ENCODE measurements at regions of chr11 and their contacts with region 1.

Region 1: DNA sequence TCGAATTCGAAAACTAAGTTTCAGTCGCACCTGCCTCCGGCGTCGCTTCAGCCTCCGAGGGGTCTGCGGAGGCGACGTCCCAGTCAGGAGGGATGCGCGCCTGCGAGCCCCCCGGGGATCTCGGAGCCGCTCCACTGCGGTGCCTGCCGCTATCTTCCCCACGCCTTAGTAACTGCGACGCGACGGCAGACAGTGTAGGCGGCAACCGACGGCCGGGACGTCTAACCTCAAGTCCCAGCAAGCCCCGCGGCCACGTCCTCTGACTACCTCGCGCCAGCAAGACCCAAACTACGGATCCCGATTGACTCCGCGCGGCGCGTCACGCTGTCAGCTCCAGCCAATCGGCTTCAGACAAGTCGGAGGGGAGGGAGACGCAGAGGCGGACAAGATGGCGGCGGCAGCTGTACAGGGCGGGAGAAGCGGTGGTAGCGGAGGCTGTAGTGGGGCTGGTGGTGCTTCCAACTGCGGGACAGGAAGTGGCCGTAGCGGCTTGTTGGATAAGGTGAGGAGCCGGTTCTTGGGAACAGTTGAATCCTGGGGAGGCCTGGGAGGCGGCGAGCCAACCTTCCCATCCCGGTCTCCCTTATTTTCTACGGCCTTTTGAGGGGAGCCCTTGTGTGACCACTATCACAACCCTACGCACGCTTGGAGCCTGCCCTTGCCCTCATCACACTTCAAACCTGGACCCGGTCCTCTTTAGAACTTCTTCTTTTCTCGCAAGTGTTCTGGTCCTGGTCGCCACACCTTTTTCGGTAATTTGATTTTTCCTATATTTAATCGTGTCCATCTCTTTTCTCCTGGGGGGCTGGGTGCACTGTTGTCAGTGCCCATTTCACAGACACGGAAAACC is at the starts of genes SPCS2 and XRRA1:
- DNase-seq: peak; percentile 99
- H3K4me3 ChIP-seq: peak within 1 kb of the TSS; percentile 55 to 95 (median 93)
- H3K27ac ChIP-seq: peak within 1 kb of the TSS; percentile 73
- H3K4me1 ChIP-seq: peaks cover 12% of the 10 kb centered on the region
- H3K27me3 ChIP-seq: no peaks in the 10 kb centered on the region
- CTCF ChIP-seq: no peak
- POLR2A ChIP-seq: peak; percentile 82
- total RNA-seq, gene SPCS2: 140 and 152 TPM in 2 replicates
- total RNA-seq, gene XRRA1: 11.2 and 28.6 TPM in 2 replicates

Region 2: GRCh38 chr11:74966651-74967050 is 17.5 kb after region 1 on chr11:
- CTCF ChIA-PET with region 1: interaction called, 4 read pairs
- POLR2A ChIA-PET with region 1: no interaction called
- dilution Hi-C with region 1: no loop called
- intact Hi-C with region 1: loop called (anchors 2 kb)
- DNase-seq: no peak
- H3K4me3 ChIP-seq: no peak overlapping the region
- H3K27ac ChIP-seq: peak overlapping the region; percentile 33
- H3K4me1 ChIP-seq: no peaks in the 10 kb centered on the region
- H3K27me3 ChIP-seq: no peaks in the 10 kb centered on the region
- CTCF ChIP-seq: no peak
- POLR2A ChIP-seq: no peak

Region 3: GRCh38 chr11:75031771-75032549 is 82.8 kb after region 1 on chr11:
- CTCF ChIA-PET with region 1: no interaction called
- POLR2A ChIA-PET with region 1: no interaction called
- dilution Hi-C with region 1: no loop called
- intact Hi-C with region 1: loop called (anchors 5 kb)
- DNase-seq: peak; percentile 70
- H3K4me3 ChIP-seq: no peak overlapping the region
- H3K27ac ChIP-seq: no peak overlapping the region
- H3K4me1 ChIP-seq: peaks cover 8% of the 10 kb centered on the region
- H3K27me3 ChIP-seq: peaks cover 0 to 7% of the 10 kb centered on the region in 2 experiments
- CTCF ChIP-seq: peak; percentile 85
- POLR2A ChIP-seq: no peak

Region 4: GRCh38 chr11:75174781-75175370 is 225.8 kb after region 1 on chr11:
- CTCF ChIA-PET with region 1: no interaction called
- POLR2A ChIA-PET with region 1: no interaction called
- dilution Hi-C with region 1: no loop called
- intact Hi-C with region 1: no loop called
- DNase-seq: no peak
- H3K4me3 ChIP-seq: no peak overlapping the region
- H3K27ac ChIP-seq: no peak overlapping the region
- H3K4me1 ChIP-seq: no peaks in the 10 kb centered on the region
- H3K27me3 ChIP-seq: peaks cover 2 to 5% of the 10 kb centered on the region in 2 experiments
- CTCF ChIP-seq: no peak
- POLR2A ChIP-seq: no peak